Mammary epithelial cell (primary cell): ENCODE measurements at regions of chr3 and their contacts with region 1.

Region 1: DNA sequence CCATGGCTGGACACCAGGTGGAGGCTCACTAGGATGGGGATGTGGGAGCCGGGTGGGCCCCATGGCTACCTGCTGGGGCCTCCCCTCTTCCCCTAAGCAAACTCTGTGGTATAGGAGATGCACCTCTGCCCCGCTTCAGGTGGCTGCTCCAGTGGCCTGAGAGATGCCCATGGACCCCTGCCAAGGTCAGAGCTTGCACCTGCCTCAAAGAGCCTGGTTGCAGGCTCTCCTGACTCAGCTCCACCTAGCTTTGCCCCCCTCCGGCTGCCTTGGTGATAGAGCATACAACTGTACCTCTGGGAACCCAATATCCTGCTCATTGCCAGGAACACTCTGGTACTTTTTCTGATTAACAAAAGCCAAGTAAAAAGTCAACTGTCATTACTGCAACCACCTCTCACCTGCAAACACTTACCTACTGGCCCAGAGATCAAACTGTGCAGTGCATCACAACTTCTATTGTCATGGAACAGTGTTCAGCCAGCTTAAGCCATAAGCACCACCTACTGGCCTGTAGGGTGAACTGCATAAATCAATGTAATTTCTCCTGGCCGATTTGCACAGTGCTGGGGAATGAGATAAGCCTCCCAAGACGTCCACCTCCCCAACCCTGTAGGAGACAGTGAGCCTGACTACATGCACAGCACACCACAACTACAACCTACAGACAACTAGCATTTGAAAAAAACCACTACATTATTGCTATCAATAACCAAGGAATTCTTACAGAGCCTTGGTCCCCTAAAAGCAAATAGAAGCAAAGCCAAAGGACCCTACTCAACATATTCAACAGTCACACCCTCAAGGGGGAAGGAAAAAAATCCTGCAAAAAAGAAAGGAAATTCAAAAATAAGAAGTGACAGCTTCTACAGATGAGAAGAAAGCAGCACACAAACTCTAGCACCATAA is 352.4 kb upstream of the ARHGEF26 start:
- DNase-seq: peak; percentile 46
- H3K4me3 ChIP-seq: no peak overlapping the region
- H3K27ac ChIP-seq: no peak overlapping the region
- H3K4me1 ChIP-seq: no peaks in the 10 kb centered on the region
- H3K27me3 ChIP-seq: no peaks in the 10 kb centered on the region
- CTCF ChIP-seq: peak; percentile 90 to 92

Region 2: DNA sequence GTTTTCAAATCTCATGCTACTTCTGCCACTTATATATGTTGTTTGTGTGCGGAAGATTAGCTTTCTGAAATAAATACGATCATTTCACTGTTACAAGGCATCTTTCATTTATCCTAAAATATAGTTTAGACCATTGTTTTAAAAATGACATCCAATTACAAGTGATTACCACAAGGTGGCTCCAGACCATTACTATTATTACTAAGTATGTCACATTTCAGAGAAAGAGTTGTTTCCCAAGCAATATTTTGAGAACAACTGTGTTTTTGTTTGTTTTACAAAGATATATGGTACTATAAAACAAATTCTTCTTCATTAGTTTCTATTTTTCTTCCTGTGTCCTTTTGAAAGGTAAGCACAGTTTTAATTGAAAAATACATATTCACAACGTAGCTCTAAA is 742.8 kb before region 1 on chr3:
- CTCF ChIA-PET with region 1: no interaction called
- dilution Hi-C with region 1: loop called (anchors 10 kb)
- in situ Hi-C with region 1: loop called (anchors 25 kb)
- intact Hi-C with region 1: loop called (anchors 2 kb)
- DNase-seq: peak; percentile 21
- H3K4me3 ChIP-seq: no peak overlapping the region
- H3K27ac ChIP-seq: no peak overlapping the region
- H3K4me1 ChIP-seq: peaks cover 9% of the 10 kb centered on the region
- H3K27me3 ChIP-seq: no peaks in the 10 kb centered on the region
- CTCF ChIP-seq: peak; percentile 60 to 66

Region 3: GRCh38 chr3:153284282-153284938 is 484.4 kb before region 1 on chr3:
- CTCF ChIA-PET with region 1: no interaction called
- dilution Hi-C with region 1: no loop called
- in situ Hi-C with region 1: loop called in 1 of 2 experiments (anchors 25 kb)
- intact Hi-C with region 1: no loop called
- DNase-seq: peak; percentile 81
- H3K4me3 ChIP-seq: no peak overlapping the region
- H3K27ac ChIP-seq: peak overlapping the region; percentile 97
- H3K4me1 ChIP-seq: peaks cover 42% of the 10 kb centered on the region
- H3K27me3 ChIP-seq: no peaks in the 10 kb centered on the region
- CTCF ChIP-seq: no peak

Region 4: DNA sequence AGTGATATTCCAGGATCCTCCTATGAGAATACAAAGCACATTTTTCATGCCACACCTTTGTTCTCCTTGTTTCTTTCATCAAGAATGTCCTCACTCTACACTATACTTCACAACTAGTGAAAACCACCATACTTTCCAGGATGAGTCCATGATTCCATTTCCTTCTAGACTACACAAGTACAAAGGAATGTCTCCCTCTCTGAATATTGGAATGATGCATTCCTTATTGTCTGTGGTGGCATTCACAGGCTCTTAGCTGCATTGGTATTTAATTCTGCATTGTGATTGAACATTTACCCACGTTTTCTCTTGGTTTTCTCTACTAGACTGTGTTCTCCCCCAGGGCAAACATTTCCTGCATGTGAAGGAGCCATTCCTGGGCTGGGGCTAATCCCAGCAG is 389.3 kb before region 1 on chr3:
- CTCF ChIA-PET with region 1: no interaction called
- dilution Hi-C with region 1: no loop called
- in situ Hi-C with region 1: no loop called
- intact Hi-C with region 1: no loop called
- DNase-seq: no peak
- H3K4me3 ChIP-seq: no peak overlapping the region
- H3K27ac ChIP-seq: no peak overlapping the region
- H3K4me1 ChIP-seq: no peaks in the 10 kb centered on the region
- H3K27me3 ChIP-seq: no peaks in the 10 kb centered on the region
- CTCF ChIP-seq: no peak

Region 5: GRCh38 chr3:153443961-153444360 is 324.9 kb before region 1 on chr3:
- CTCF ChIA-PET with region 1: no interaction called
- dilution Hi-C with region 1: no loop called
- in situ Hi-C with region 1: no loop called
- intact Hi-C with region 1: loop called (anchors 10 kb)
- DNase-seq: no peak
- H3K4me3 ChIP-seq: no peak overlapping the region
- H3K27ac ChIP-seq: no peak overlapping the region
- H3K4me1 ChIP-seq: no peaks in the 10 kb centered on the region
- H3K27me3 ChIP-seq: no peaks in the 10 kb centered on the region
- CTCF ChIP-seq: peak in 1 of 2 donors; percentile 9

Region 6: GRCh38 chr3:153704115-153704514 is 64.7 kb before region 1 on chr3:
- CTCF ChIA-PET with region 1: no interaction called
- dilution Hi-C with region 1: no loop called
- in situ Hi-C with region 1: no loop called
- intact Hi-C with region 1: loop called (anchors 1 kb)
- DNase-seq: peak; percentile 17
- H3K4me3 ChIP-seq: no peak overlapping the region
- H3K27ac ChIP-seq: no peak overlapping the region
- H3K4me1 ChIP-seq: no peaks in the 10 kb centered on the region
- H3K27me3 ChIP-seq: no peaks in the 10 kb centered on the region
- CTCF ChIP-seq: peak in 1 of 2 donors; percentile 48